PC-9 (cell line): ENCODE measurements at regions of chr16 and their contacts with region 1.

Region 1: GRCh38 chr16:69396187-69397061 is 10.6 kb upstream of the TERF2 start:
- DNase-seq: peak; percentile 63 to 96
- H3K4me3 ChIP-seq: peak overlapping the region; percentile 24; the same call in 1 of the 2 replicates
- H3K27ac ChIP-seq: peak overlapping the region; percentile 82
- H3K4me1 ChIP-seq: peaks cover 41% of the 10 kb centered on the region
- H3K27me3 ChIP-seq: no peaks in the 10 kb centered on the region
- CTCF ChIP-seq: peak; percentile 92

Region 2: GRCh38 chr16:69424053-69424934 is 27.9 kb after region 1 on chr16 and contains the start of gene CYB5B:
- CTCF ChIA-PET with region 1: interaction called, 5 read pairs
- POLR2A ChIA-PET with region 1: interaction called, 16 read pairs
- intact Hi-C with region 1: no loop called
- DNase-seq: peak; percentile 94 to 99
- H3K4me3 ChIP-seq: peak within 1 kb of the TSS; percentile 86
- H3K27ac ChIP-seq: peak within 1 kb of the TSS; percentile 63
- H3K4me1 ChIP-seq: peaks cover 8% of the 10 kb centered on the region; the same call in 1 of the 2 replicates
- H3K27me3 ChIP-seq: no peaks in the 10 kb centered on the region
- CTCF ChIP-seq: no peak
- total RNA-seq, gene CYB5B: 29.3 and 29.8 TPM in 2 replicates

Region 3: GRCh38 chr16:69565671-69566239 is 169.3 kb after region 1 on chr16 and contains the start of gene NFAT5:
- CTCF ChIA-PET with region 1: no interaction called
- POLR2A ChIA-PET with region 1: no interaction called
- intact Hi-C with region 1: loop called (anchors 1 kb)
- DNase-seq: peak; percentile 67 to 94
- H3K4me3 ChIP-seq: peak within 1 kb of the TSS; percentile 79
- H3K27ac ChIP-seq: peak within 1 kb of the TSS; percentile 88
- H3K4me1 ChIP-seq: peaks cover 56% of the 10 kb centered on the region
- H3K27me3 ChIP-seq: no peaks in the 10 kb centered on the region
- CTCF ChIP-seq: no peak
- total RNA-seq, gene NFAT5: 33.0 and 38.2 TPM in 2 replicates

Region 4: GRCh38 chr16:69644790-69645189 is 248.4 kb after region 1 on chr16:
- CTCF ChIA-PET with region 1: interaction called, 3 read pairs
- POLR2A ChIA-PET with region 1: no interaction called
- intact Hi-C with region 1: loop called (anchors 10 kb)
- DNase-seq: no peak
- H3K4me3 ChIP-seq: no peak overlapping the region
- H3K27ac ChIP-seq: no peak overlapping the region
- H3K4me1 ChIP-seq: no peaks in the 10 kb centered on the region
- H3K27me3 ChIP-seq: no peaks in the 10 kb centered on the region
- CTCF ChIP-seq: no peak

Region 5: DNA sequence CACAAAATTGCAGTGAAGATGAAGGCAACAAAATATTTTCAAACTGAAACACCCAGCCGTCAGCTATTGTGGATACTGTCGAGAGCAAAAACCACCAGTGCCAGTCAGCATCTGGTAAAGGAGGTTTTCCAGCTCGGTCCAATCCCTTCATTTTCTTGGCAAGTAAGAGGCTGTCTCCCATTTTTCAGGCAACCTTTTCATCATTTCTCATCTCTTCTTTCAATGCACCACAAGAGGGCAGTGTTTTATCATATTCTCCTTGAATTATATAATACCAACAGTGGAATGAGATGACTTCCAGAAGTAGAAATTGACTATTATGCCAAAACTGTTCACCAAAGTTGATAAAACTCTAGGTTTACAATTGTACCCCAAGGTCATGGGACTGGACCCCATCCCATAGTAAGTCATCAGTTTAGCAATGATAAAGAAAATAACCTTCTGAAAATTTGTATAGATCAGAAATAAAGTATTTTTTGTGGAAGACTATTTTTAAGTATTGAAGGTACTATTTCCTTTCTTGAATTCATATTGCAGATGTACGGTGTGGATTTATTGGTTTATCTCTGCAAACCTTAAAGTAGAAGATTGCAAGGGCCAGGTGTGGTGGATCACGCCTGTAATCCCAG is 313.1 kb after region 1 on chr16:
- CTCF ChIA-PET with region 1: no interaction called
- POLR2A ChIA-PET with region 1: no interaction called
- intact Hi-C with region 1: loop called (anchors 5 kb)
- DNase-seq: peak in 1 of 2 experiments; percentile 51
- H3K4me3 ChIP-seq: no peak overlapping the region
- H3K27ac ChIP-seq: no peak overlapping the region
- H3K4me1 ChIP-seq: peaks cover 18% of the 10 kb centered on the region
- H3K27me3 ChIP-seq: no peaks in the 10 kb centered on the region
- CTCF ChIP-seq: peak; percentile 81

Region 6: GRCh38 chr16:69754469-69755310 is 358.3 kb after region 1 on chr16 and contains the start of gene NOB1:
- CTCF ChIA-PET with region 1: no interaction called
- POLR2A ChIA-PET with region 1: interaction called, 7 read pairs
- intact Hi-C with region 1: loop called (anchors 1 kb)
- DNase-seq: peak; percentile 91 to 97
- H3K4me3 ChIP-seq: peak within 1 kb of the TSS; percentile 95
- H3K27ac ChIP-seq: peak within 1 kb of the TSS; percentile 52
- H3K4me1 ChIP-seq: peaks cover 20% of the 10 kb centered on the region
- H3K27me3 ChIP-seq: no peaks in the 10 kb centered on the region
- CTCF ChIP-seq: peak; percentile 94
- total RNA-seq, gene NOB1: 66.9 and 93.2 TPM in 2 replicates